ENCODE measurements at regions of chr17 and their contacts with region 1.

Region 1: DNA sequence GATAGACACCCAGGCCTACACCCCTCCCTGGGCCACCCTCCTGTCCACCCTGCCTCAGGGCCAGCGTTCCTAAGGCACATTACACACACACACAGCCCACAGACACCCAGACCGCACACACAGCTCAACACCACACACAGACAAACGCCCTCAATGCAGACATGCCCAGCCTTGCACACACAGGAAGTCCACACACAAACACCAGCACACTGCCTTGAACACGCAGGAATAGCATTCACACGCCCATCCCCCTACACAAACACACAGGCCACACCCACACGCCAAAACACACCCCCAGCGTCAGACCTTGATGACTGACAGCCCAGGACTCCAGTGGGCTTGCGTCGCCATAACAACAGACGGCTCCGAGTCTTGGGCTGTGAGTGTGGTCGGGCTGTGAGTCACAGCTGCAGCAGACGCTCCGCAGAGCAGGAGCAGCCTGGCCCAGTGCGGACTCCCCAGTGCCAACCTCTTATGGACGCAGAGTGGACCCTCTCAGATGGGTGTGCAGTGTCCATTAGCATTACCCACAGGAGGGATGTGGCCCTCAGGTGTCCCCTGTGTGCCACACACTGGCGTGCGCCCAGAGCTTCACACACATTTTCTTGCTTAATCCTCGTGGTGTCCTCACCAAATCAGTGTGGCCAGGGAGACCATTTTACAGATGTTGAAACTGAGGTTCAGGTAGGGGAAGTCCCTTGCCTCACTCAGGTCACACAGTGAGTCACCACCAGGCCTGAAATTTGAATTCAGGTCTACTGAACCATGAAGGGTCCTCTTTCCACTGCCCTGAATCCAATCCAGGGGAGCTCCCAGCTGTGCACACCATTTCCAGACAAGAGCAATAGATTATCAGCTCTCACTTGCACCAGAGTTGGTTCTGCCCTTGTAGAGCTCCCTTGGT is 17.8 kb upstream of the RAI1 start:
- DNase-seq: peak; percentile 87
- H3K27ac ChIP-seq: peak overlapping the region; percentile 66
- CTCF ChIP-seq: no peak

Region 2: DNA sequence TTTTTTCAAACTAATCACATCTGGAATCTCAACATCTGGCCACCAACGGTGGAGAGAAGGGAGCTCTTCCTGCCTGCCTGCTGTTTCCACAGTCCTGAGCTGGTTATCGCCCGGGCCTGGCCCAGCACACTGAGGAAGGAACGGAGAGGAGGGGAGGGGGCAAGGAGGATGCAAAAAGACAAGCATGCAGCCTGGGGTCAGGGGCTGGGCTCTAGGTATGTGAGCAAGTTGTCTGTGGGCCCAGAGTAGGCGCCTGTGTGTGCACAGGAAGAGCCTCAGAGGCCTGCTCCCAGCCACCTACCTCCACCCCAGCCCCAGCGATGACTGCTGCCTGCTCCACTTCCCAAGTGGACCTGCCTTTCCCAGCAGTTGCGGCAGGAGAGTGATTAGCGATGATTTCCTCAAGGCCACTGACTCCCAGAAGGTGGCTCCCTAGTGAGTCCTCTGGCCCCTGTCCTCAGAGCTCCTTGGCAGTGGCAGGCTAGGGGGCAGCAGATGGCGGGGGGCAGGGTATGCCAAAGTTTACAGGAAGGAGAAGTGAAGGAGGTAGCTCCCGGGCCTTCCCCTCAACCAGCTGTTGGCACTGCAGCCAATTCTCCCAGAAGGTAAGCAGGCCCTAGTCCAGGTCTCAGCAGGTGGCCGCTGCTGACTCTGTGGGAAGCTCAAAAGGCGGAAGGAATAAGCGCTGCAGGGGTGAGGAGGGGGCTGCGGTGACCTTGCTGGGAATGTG is 140.2 kb before region 1 on chr17:
- CTCF ChIA-PET with region 1: no interaction called
- POLR2A ChIA-PET with region 1: interaction called, 11 read pairs
- DNase-seq: no peak
- H3K27ac ChIP-seq: no peak overlapping the region
- CTCF ChIP-seq: no peak

Region 3: DNA sequence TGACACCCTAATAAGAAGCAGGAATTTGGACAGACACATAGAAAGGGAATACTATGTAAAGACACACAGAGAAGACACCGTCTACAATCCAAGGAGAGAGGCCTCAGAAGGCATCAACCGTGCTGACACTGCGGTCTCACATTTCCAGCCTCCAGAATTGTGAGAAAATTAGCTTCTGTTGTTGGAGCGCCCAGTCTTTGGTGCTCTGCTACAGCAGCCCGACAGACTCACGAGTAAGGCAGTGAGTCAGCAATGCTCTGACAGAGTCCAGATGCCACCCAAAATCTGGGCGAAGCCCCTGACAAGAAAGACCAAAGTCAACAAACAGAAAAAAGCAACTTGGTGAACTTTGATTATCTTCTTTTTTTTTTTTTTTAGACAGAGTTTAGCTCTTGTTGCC is 14.7 kb before region 1 on chr17:
- CTCF ChIA-PET with region 1: no interaction called
- POLR2A ChIA-PET with region 1: no interaction called
- DNase-seq: no peak
- H3K27ac ChIP-seq: no peak overlapping the region
- CTCF ChIP-seq: no peak

Measured in RWPE1 (cell line).